ENCODE measurements at regions of chr3 and their contacts with region 1.

Region 1: GRCh38 chr3:38127611-38128302 is 9.2 kb downstream of the ACAA1 start:
- DNase-seq: peak in 1 of 4 donors; percentile 60
- ATAC-seq: peak; percentile 89
- H3K4me3 ChIP-seq: no peak overlapping the region
- H3K27ac ChIP-seq: peak overlapping the region; percentile 44 to 50
- H3K4me1 ChIP-seq: peaks cover 8 to 34% of the 10 kb centered on the region in 2 donors
- H3K27me3 ChIP-seq: no peaks in the 10 kb centered on the region
- CTCF ChIP-seq: no peak

Region 2: GRCh38 chr3:37974121-37975083 is 153.4 kb before region 1 on chr3:
- intact Hi-C with region 1: no loop called
- DNase-seq: peak in 3 of 4 donors; percentile 65 to 90 (median 71)
- ATAC-seq: peak; percentile 96
- H3K4me3 ChIP-seq: no peak overlapping the region
- H3K27ac ChIP-seq: no peak overlapping the region
- H3K4me1 ChIP-seq: peaks cover 0 to 15% of the 10 kb centered on the region in 2 donors
- H3K27me3 ChIP-seq: no peaks in the 10 kb centered on the region
- CTCF ChIP-seq: peak; percentile 75 to 94

Region 3: DNA sequence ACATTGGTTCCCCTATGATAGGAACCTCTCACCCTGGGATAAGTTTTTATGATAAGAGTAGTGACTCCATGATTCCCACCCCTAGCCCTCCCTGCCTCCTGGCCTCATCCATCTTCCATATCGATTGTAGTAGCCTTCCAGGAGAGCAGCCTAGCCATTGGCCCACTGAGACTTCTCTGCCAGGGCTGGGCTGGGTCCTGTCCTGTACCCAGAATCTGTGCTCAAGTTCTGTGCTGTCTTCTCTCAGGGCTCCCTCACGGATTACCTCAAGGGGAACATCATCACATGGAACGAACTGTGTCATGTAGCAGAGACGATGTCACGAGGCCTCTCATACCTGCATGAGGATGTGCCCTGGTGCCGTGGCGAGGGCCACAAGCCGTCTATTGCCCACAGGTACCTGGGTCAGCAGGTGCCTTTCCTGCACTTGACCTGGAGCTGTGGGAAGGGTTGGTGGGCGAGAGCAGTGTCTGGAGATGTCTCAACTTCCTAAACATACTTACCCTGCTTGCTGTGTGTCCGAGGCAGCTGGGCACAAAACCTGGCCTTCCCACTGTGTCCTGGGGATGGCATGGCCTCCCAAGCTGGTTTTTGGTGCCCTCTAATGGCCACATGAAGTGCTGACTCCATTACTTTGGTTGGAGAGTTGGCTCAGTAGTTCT is 351.8 kb after region 1 on chr3:
- intact Hi-C with region 1: loop called in 1 of 2 experiments (anchors 10 kb)
- DNase-seq: peak in 3 of 4 donors; percentile 50 to 77 (median 53)
- ATAC-seq: peak; percentile 95
- H3K4me3 ChIP-seq: no peak overlapping the region
- H3K27ac ChIP-seq: no peak overlapping the region
- H3K4me1 ChIP-seq: no peaks in the 10 kb centered on the region
- H3K27me3 ChIP-seq: no peaks in the 10 kb centered on the region
- CTCF ChIP-seq: peak; percentile 74 to 78